Left ventricle myocardium inferior (tissue), 1 donor: ENCODE measurements at regions of chr19 and their contacts with region 1.

Region 1: GRCh38 chr19:14689598-14690503 is at the start of gene ZNF333:
- DNase-seq: peak; percentile 98
- H3K4me3 ChIP-seq: peak within 1 kb of the TSS; percentile 91
- H3K27ac ChIP-seq: peak within 1 kb of the TSS; percentile 93
- H3K4me1 ChIP-seq: peaks cover 25% of the 10 kb centered on the region
- H3K27me3 ChIP-seq: no peaks in the 10 kb centered on the region
- CTCF ChIP-seq: no peak
- total RNA-seq, gene ZNF333: 6.5 TPM

Region 2: GRCh38 chr19:14577885-14578427 is 111.9 kb before region 1 on chr19:
- intact Hi-C with region 1: loop called (anchors 5 kb)
- DNase-seq: no peak
- H3K4me3 ChIP-seq: no peak overlapping the region
- H3K27ac ChIP-seq: no peak overlapping the region
- H3K4me1 ChIP-seq: peaks cover 9% of the 10 kb centered on the region
- H3K27me3 ChIP-seq: no peaks in the 10 kb centered on the region
- CTCF ChIP-seq: no peak

Region 3: GRCh38 chr19:14603990-14604387 is 85.9 kb before region 1 on chr19:
- intact Hi-C with region 1: no loop called
- DNase-seq: no peak
- H3K4me3 ChIP-seq: no peak overlapping the region
- H3K27ac ChIP-seq: no peak overlapping the region
- H3K4me1 ChIP-seq: no peaks in the 10 kb centered on the region
- H3K27me3 ChIP-seq: peaks cover 26% of the 10 kb centered on the region
- CTCF ChIP-seq: no peak